Pancreas (tissue), 10 donors: ENCODE measurements at regions of chr14 and their contacts with region 1.

Region 1: DNA sequence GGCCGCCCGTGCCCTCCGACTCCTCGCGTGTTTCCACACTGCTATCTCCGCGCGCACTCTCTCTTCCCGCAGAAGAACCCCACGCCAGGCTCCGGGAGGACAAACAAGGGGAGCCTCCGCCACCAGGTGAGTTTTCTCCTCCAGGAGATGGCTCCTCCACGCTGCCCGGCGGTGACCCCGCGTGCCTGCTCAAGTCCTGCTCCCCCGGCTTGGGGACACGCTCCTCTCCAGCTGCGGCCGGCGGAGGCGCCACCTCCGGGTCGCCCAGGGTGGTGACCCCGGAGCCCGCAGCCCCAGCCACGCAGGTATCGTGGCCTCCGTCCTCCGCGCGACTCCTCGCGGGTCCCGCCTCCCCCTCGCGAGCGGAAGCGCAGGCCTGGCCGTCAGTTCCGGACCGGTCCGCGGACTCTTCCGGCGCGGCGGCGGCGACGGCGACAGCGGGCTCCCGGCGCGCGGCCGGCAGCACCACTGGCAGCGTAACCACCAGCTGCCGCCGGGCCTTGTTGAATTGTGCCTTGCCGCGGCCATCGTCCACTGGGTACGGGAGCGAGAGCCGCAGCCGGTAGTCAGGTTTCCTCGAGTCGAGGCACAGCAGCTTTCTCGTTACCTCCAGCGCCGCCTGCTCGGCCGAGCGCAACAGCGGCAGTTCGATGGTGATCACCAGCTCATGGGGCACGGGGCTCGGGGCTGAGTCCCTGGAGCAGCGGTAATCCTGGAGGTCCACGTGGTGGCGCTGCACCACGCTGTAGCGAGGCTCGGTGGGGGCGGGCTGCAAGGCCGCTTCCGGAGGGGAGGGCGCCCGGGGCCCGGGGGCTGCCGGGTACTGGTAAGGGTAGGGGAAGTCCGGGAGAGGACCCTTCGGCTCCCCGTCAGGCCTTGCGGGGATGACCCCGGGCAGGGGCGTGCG is 1.2 kb downstream of the DNAAF2 start:
- DNase-seq: peak; percentile 93 to 97 (median 96)
- ATAC-seq: peak; percentile 86 to 96 (median 88)
- H3K4me3 ChIP-seq: peak overlapping the region; percentile 76 to 98 (median 92)
- H3K27ac ChIP-seq: peak overlapping the region; percentile 94 to 99 (median 98)
- H3K4me1 ChIP-seq: peaks cover 9 to 25% (median 17%) of the 10 kb centered on the region in 3 donors
- H3K27me3 ChIP-seq: no peaks in the 10 kb centered on the region
- CTCF ChIP-seq: peak; percentile 66 to 74 (median 72)

Region 2: GRCh38 chr14:49249022-49249421 is 384.9 kb before region 1 on chr14:
- intact Hi-C with region 1: no loop called
- DNase-seq: no peak
- ATAC-seq: no peak
- H3K4me3 ChIP-seq: no peak overlapping the region
- H3K27ac ChIP-seq: no peak overlapping the region
- H3K4me1 ChIP-seq: no peaks in the 10 kb centered on the region
- H3K27me3 ChIP-seq: no peaks in the 10 kb centered on the region
- CTCF ChIP-seq: no peak

Region 3: GRCh38 chr14:49512147-49512551 is 121.7 kb before region 1 on chr14:
- intact Hi-C with region 1: no loop called
- DNase-seq: no peak
- ATAC-seq: peak in 1 of 4 donors; percentile 21
- H3K4me3 ChIP-seq: no peak overlapping the region
- H3K27ac ChIP-seq: no peak overlapping the region
- H3K4me1 ChIP-seq: no peaks in the 10 kb centered on the region
- H3K27me3 ChIP-seq: no peaks in the 10 kb centered on the region
- CTCF ChIP-seq: no peak

Region 4: DNA sequence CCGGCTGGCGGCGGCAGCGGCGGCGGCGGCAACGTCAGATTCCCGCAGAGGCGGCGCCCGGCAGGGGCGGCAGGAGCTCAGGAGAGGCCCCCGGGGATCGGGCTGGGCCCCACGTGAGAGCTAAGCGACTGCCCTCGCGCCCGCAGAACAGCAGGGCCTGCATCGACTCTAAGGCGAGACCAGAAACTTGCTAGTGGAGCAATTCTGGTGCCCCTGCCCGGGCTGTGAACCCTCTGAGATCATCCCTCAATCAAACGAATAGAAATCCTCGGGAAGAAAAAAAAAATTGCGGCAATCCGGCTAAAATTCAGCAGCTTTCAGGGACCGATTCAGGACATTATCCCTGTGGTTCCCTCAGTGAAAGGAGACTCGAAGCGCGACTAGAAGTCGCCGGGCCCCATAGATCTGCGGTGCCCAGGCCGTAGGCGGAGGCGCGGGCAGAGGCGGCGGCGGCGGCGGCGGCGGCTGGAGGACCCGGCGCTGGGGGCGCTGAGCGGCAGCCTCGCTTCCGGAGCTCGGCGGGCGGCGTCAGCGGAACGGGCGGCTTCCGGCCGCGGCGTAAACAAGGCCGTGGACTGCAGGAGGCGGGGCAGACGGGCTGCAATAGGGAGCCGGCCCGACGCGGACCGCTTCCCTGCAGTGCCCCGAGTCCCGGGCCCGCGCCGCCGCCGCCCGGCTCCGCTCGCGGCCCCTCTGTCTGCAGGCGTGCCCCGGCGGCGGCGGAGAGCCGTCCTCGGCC is 133.8 kb after region 1 on chr14 and contains the start of gene KLHDC2:
- intact Hi-C with region 1: loop called in 1 of 3 experiments (anchors 5 kb)
- DNase-seq: peak; percentile 89 to 95 (median 92)
- ATAC-seq: peak; percentile 80 to 88 (median 87)
- H3K4me3 ChIP-seq: peak within 1 kb of the TSS; percentile 59 to 99 (median 82)
- H3K27ac ChIP-seq: peak within 1 kb of the TSS; percentile 84 to 97 (median 96)
- H3K4me1 ChIP-seq: peaks cover 6 to 24% (median 16%) of the 10 kb centered on the region in 3 donors
- H3K27me3 ChIP-seq: no peaks in the 10 kb centered on the region
- CTCF ChIP-seq: peak in 2 of 4 donors; percentile 7 to 13
- total RNA-seq, gene KLHDC2: 25.4 to 50.9 (median 45.4) TPM